Psoas muscle (tissue), 8 donors: ENCODE measurements at regions of chr5 and their contacts with region 1.

Region 1: GRCh38 chr5:150486402-150487198 is 21.3 kb upstream of the NDST1 start:
- DNase-seq: peak; percentile 64 to 67
- ATAC-seq: peak; percentile 10 to 45 (median 29)
- H3K4me3 ChIP-seq: peak overlapping the region; percentile 100
- H3K27ac ChIP-seq: peak overlapping the region; percentile 93
- H3K4me1 ChIP-seq: peaks cover 55% of the 10 kb centered on the region
- H3K27me3 ChIP-seq: no peaks in the 10 kb centered on the region
- CTCF ChIP-seq: no peak

Region 2: GRCh38 chr5:150449517-150450339 is 36.9 kb before region 1 on chr5 and contains the start of gene RPS14:
- intact Hi-C with region 1: loop called in 1 of 2 experiments (anchors 5 kb)
- DNase-seq: peak; percentile 93 to 97
- ATAC-seq: peak; percentile 96 to 98 (median 96)
- H3K4me3 ChIP-seq: peak within 1 kb of the TSS; percentile 82
- H3K27ac ChIP-seq: peak within 1 kb of the TSS; percentile 94
- H3K4me1 ChIP-seq: peaks cover 17% of the 10 kb centered on the region
- H3K27me3 ChIP-seq: no peaks in the 10 kb centered on the region
- CTCF ChIP-seq: peak; percentile 88
- total RNA-seq, gene RPS14: 977 to 1,443 (median 1,285) TPM

Region 3: DNA sequence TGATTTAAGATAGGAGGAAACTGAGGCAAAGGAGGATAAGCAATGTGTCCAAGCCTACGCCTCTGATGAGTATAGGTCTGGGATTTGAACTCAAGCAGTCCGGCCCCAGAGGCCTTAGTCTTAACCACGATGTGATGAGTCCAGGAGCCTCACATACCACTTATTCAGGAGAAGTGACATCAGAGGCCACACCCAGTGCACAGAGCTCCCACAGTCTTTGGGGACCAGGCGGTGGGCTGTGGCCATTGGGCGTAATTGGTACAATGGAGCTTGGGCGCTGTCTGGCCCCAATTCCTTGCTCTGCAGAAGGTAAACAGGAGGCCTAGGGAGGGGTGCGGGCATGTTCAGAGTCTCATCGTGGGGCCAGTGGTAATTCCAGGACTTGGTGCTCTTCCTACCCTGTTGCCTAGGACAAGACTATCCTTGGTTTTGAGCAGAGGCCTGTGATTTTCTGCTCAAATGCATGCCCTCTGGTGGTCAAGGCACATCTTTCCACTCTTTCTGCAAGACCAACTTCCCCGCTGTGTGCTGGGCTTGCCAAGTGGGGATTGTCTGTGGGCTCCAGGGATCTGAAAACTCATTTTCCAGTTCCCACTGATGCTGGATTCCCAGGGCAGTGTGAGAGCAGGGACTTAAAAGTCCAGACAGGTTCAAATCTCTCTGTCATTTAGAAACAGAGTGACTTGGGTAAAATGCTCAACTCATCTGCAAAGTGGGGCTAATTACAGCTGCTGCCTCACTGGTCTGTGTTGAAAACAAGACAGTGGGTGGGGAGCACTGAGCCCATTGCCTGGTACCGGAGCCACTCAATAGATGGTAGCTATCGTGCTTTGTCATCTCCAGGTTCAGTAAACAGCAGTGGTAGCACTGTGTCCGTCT is 37.1 kb after region 1 on chr5:
- intact Hi-C with region 1: loop called (anchors 5 kb)
- DNase-seq: no peak
- ATAC-seq: peak; percentile 35 to 77 (median 52)
- H3K4me3 ChIP-seq: no peak overlapping the region
- H3K27ac ChIP-seq: peak overlapping the region; percentile 5
- H3K4me1 ChIP-seq: peaks cover 77% of the 10 kb centered on the region
- H3K27me3 ChIP-seq: no peaks in the 10 kb centered on the region
- CTCF ChIP-seq: peak; percentile 59

Region 4: GRCh38 chr5:150538007-150538917 is 51.7 kb after region 1 on chr5:
- intact Hi-C with region 1: loop called in 1 of 2 experiments (anchors 5 kb)
- DNase-seq: no peak
- ATAC-seq: peak in 3 of 4 donors; percentile 49 to 76 (median 71)
- H3K4me3 ChIP-seq: no peak overlapping the region
- H3K27ac ChIP-seq: no peak overlapping the region
- H3K4me1 ChIP-seq: peaks cover 10% of the 10 kb centered on the region
- H3K27me3 ChIP-seq: no peaks in the 10 kb centered on the region
- CTCF ChIP-seq: no peak